ENCODE measurements at regions of chr17 and their contacts with region 1.

Region 1: DNA sequence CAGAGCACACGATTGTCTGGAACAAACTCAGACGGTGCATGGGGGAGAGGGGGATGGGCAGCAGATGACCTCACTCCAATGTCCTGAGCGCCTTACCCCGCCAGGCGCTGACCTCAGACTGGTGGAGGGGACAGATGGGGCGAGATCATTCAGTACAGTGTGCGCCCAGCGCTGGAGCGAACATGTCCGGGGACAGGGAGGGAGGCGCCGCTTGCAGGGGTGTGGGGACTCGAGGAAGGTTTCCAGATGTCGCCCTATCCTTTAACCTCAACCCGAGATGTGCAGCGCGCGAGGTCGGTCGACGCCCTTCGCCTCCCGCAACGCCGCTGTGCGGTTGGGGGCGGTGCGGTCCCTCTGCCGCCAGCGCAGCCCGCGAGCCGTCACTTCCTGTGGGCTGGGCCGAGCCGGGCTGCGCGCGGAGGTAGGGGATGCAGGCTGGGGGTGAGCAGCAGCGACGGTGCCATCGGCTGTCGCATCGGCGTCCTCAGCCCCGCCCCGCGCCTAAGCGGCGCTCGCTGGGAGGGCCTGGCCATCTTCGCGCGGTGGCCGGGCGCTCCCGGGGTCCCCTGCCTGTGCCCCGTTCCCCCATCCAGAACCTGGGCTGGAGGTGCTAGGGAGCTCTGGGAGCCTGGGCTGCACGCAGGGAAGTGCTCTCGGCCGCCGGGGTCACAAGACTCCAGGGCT is 5.3 kb upstream of the CDR2L start:
- DNase-seq: peak; percentile 87
- H3K4me3 Mint-ChIP-seq: peak overlapping the region; percentile 77
- H3K27ac Mint-ChIP-seq: peak overlapping the region; percentile 61
- H3K4me1 Mint-ChIP-seq: peaks cover 14% of the 10 kb centered on the region
- H3K27me3 Mint-ChIP-seq: peaks cover 1% of the 10 kb centered on the region

Region 2: DNA sequence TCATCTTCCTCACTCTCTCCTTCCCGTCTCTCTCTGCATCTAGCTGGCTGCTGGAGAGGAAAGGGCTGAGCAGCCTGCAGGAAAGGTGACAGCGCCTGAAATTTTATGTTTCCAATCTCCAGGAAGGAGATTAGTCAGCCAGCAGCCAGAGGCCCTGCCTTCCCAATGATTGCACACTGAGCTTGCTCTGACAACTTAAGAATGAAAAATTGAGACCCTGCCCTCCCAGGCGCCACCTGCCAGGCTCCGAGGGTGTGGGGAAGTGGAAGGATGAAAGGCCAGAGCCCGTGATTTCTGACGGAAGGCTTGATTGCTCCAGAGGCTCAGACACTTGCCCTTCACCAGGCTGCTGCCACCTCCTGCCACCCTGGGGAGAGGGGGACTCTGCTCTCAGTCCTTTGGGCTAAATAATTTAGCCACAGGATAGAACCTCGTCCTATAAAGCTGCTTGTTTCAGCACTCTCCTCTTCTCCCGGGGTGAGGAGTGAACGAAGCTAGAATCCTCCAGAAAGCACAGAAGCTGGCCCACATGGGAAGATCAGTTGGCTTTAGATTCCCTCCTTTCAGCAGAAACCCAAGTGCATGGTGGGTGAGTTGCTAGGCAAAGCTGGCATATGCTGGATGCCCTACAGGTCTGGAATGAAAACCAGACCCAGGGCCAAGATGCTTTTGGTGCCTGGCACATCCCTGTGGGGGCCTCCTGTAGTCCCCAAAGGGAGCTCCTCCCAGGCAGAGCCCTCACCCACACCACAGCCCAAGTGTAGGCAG is 156.0 kb before region 1 on chr17:
- CTCF ChIA-PET with region 1: no interaction called
- POLR2A ChIA-PET with region 1: no interaction called
- intact Hi-C with region 1: no loop called
- DNase-seq: no peak
- H3K4me3 Mint-ChIP-seq: no peak overlapping the region
- H3K27ac Mint-ChIP-seq: no peak overlapping the region
- H3K4me1 Mint-ChIP-seq: no peaks in the 10 kb centered on the region
- H3K27me3 Mint-ChIP-seq: no peaks in the 10 kb centered on the region

Region 3: DNA sequence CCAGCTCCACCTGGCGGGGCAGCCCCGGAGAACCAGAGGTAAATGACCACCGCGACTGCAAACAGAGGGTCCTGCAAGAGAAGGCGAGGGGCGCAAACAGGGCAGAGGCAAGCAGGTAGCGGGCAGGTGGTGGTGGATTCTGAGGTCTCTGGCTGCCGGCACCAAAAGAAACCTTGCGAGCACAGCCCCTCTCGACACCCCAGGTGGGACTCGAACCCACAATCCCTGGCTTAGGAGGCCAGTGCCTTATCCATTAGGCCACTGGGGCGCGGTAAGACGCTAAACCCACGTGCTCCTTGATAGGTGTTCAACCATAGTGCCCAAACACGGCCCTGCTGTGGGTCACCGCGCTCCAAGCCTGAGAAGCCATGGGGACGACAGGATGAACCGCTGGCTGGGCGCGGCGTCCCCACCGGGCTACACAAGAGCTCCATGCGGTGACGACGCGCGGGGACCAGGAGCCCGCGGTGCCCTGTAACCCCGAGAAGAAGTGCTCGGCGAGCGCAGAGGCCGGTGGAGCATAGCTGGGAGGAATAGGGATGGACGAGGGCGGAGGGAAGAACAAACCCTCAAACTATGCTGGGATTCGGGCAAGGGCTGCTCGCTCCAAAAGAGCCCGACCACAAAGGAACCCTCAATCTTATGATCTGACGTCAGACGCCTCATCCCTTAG is 52.3 kb after region 1 on chr17:
- CTCF ChIA-PET with region 1: no interaction called
- POLR2A ChIA-PET with region 1: no interaction called
- intact Hi-C with region 1: loop called (anchors 2 kb)
- DNase-seq: peak; percentile 95
- H3K4me3 Mint-ChIP-seq: peak overlapping the region; percentile 97
- H3K27ac Mint-ChIP-seq: peak overlapping the region; percentile 96
- H3K4me1 Mint-ChIP-seq: peaks cover 49% of the 10 kb centered on the region
- H3K27me3 Mint-ChIP-seq: peaks cover 4% of the 10 kb centered on the region

Measured in activated CD4-positive, alpha-beta memory T cell treated with anti-CD3 and anti-CD28 coated beads for 36 hours (primary cell).